Activated CD8-positive, alpha-beta T cell treated with anti-CD3 and anti-CD28 coated beads for 36 hours (primary cell): ENCODE measurements at regions of chr11 and their contacts with region 1.

Region 1: DNA sequence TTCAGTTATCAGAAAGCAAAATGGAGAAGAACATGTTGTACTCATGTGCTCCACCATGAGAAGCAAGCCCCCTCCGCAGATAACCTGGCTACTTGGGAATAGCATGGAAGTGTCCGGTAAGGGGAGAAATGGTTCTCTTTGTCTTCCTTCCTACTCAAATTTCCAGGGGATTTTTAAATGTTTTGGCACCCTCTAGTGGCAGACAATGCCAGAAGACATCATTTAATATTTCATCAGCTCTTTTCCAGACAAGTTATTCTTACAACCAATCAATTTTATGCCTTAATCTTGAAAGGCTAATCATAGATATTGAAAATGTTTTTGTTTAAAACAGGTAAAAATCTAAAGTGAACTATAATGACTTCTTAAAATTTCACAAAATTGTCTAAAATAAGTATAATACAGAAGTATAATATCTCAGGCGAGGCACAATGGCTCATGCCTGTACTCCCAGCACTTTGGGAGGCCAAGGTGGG is 15.7 kb downstream of the CRTAM start:
- DNase-seq: peak; percentile 64
- ATAC-seq: no peak
- H3K4me3 Mint-ChIP-seq: no peak overlapping the region
- H3K27ac Mint-ChIP-seq: no peak overlapping the region
- H3K4me1 Mint-ChIP-seq: peaks cover 66% of the 10 kb centered on the region
- H3K27me3 Mint-ChIP-seq: no peaks in the 10 kb centered on the region
- CTCF ChIP-seq: peak; percentile 95

Region 2: GRCh38 chr11:122556605-122557004 is 297.4 kb before region 1 on chr11:
- CTCF ChIA-PET with region 1: no interaction called
- POLR2A ChIA-PET with region 1: no interaction called
- intact Hi-C with region 1: no loop called
- DNase-seq: peak; percentile 19
- ATAC-seq: peak; percentile 37
- H3K4me3 Mint-ChIP-seq: no peak overlapping the region
- H3K27ac Mint-ChIP-seq: no peak overlapping the region
- H3K4me1 Mint-ChIP-seq: no peaks in the 10 kb centered on the region
- H3K27me3 Mint-ChIP-seq: peaks cover 14% of the 10 kb centered on the region
- CTCF ChIP-seq: no peak

Region 3: DNA sequence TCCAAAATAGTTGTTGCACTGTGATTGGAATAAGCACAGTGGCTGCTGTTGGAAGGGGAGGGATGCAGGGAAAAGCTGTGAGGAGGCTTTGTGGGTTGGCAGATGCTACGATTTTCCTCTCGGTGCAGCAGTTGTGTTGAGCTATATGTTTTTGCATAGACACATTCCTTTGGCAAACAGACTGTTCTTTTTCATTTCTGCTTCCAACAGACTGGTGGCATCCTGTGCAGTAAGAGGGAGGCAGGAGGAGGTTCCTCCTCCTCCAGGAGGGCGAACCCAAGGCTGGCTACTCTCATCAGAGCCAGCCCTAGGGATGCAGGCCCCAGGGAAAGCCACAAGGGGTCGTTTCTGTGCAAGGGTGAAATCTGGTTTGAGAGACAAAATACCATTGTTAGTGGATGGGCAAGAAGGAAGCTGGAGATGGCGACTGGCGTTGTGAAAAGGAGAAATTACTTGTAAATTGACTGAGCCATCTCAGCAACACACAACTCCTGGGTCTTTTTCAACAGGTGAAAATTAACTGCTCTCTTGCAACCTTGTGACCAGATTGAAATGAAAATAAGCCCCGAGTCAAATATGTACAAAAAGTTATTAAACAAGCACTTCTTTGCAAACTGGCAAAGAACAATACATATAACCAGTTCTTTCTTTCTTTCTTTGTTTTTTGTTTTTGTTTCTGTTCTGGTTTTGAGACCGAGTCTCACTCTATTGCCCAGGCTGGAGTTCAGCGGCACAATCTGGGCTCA is 225.0 kb before region 1 on chr11:
- CTCF ChIA-PET with region 1: interaction called, 9 read pairs
- POLR2A ChIA-PET with region 1: no interaction called
- intact Hi-C with region 1: loop called (anchors 5 kb)
- DNase-seq: peak; percentile 83
- ATAC-seq: peak; percentile 96
- H3K4me3 Mint-ChIP-seq: no peak overlapping the region
- H3K27ac Mint-ChIP-seq: no peak overlapping the region
- H3K4me1 Mint-ChIP-seq: peaks cover 14% of the 10 kb centered on the region
- H3K27me3 Mint-ChIP-seq: no peaks in the 10 kb centered on the region
- CTCF ChIP-seq: peak; percentile 86

Region 4: GRCh38 chr11:122749005-122749687 is 104.9 kb before region 1 on chr11:
- CTCF ChIA-PET with region 1: interaction called, 7 read pairs
- POLR2A ChIA-PET with region 1: interaction called, 3 read pairs
- intact Hi-C with region 1: loop called (anchors 5 kb)
- DNase-seq: peak; percentile 83
- ATAC-seq: peak; percentile 73
- H3K4me3 Mint-ChIP-seq: no peak overlapping the region
- H3K27ac Mint-ChIP-seq: no peak overlapping the region
- H3K4me1 Mint-ChIP-seq: peaks cover 30% of the 10 kb centered on the region
- H3K27me3 Mint-ChIP-seq: no peaks in the 10 kb centered on the region
- CTCF ChIP-seq: no peak

Region 5: DNA sequence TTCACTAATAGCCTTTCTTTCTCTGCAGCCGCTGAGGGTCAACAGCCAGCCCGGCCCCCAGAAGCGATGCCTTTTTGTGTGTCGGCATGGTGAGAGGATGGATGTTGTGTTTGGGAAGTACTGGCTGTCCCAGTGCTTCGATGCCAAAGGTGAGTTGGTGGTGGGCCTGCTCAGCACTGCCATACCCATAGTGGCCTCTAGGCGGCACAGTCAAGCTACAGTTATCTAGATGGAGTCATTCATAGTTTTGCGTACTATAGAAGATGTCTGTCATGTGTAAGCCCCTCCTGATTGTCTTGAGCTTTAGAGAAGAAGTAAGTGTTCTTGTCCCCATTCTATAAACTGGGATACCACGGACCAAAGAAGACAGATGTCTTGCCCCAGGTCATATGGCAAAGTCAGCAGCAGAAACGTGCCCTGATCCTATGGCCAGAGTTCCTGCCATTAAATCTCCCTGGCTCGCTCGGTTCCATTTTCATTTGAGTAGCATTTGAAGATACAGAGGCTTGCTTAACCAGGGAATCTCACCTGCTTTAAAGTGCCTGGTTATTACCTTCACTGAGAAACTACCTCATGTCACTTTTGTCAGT is 57.8 kb before region 1 on chr11:
- CTCF ChIA-PET with region 1: interaction called, 352 read pairs
- POLR2A ChIA-PET with region 1: interaction called, 14 read pairs
- intact Hi-C with region 1: loop called (anchors 2 kb)
- DNase-seq: peak; percentile 88
- ATAC-seq: peak; percentile 100
- H3K4me3 Mint-ChIP-seq: no peak overlapping the region
- H3K27ac Mint-ChIP-seq: no peak overlapping the region
- H3K4me1 Mint-ChIP-seq: peaks cover 2% of the 10 kb centered on the region
- H3K27me3 Mint-ChIP-seq: no peaks in the 10 kb centered on the region
- CTCF ChIP-seq: peak; percentile 95

Region 6: GRCh38 chr11:122821169-122821568 is 32.8 kb before region 1 on chr11:
- CTCF ChIA-PET with region 1: interaction called, 108 read pairs
- POLR2A ChIA-PET with region 1: interaction called, 10 read pairs
- intact Hi-C with region 1: no loop called
- DNase-seq: no peak
- ATAC-seq: no peak
- H3K4me3 Mint-ChIP-seq: no peak overlapping the region
- H3K27ac Mint-ChIP-seq: no peak overlapping the region
- H3K4me1 Mint-ChIP-seq: peaks cover 22% of the 10 kb centered on the region
- H3K27me3 Mint-ChIP-seq: no peaks in the 10 kb centered on the region
- CTCF ChIP-seq: no peak

Region 7: GRCh38 chr11:122874991-122875390 is 21.0 kb after region 1 on chr11:
- CTCF ChIA-PET with region 1: interaction called, 10 read pairs
- POLR2A ChIA-PET with region 1: no interaction called
- intact Hi-C with region 1: no loop called
- DNase-seq: no peak
- ATAC-seq: no peak
- H3K4me3 Mint-ChIP-seq: no peak overlapping the region
- H3K27ac Mint-ChIP-seq: no peak overlapping the region
- H3K4me1 Mint-ChIP-seq: peaks cover 14% of the 10 kb centered on the region
- H3K27me3 Mint-ChIP-seq: no peaks in the 10 kb centered on the region
- CTCF ChIP-seq: no peak

Region 8: DNA sequence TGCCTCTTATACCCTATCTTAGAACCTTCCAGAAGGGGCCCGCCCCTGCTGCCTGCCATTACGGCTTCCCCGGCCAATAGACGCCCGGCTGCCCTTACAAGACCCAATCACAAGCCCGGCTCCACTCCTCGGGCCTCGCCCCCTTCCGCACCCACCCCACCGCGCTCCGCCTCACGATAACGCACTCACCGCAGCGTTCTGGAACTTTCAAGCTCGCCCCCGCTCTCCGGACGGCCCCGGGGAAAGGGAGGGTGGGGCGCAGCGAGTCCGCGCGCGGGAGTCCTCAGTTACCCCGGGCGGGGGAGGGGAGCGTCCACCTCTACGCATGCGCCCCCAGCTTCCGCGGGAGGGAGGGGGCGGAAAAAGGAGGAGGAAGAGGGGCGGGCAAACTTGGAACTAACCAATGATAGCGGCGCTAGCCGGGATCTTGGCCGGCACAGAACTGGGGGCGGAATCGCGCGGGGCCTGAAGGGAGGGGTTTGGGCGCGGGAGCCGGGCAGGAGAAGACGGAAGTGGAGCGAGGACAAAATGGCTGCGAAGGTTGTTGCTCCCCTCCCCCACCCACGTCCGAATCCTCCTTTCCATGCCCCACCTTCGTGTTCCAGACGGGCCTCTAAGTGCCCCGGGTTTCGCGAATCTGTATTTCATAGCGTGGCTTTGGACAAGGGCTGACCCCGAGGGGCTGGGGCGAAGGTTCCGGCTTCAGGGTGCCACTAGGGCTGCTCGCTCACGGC is 208.3 kb after region 1 on chr11:
- CTCF ChIA-PET with region 1: interaction called, 4 read pairs
- POLR2A ChIA-PET with region 1: interaction called, 17 read pairs
- intact Hi-C with region 1: no loop called
- DNase-seq: peak; percentile 100
- ATAC-seq: peak; percentile 86
- H3K4me3 Mint-ChIP-seq: peak overlapping the region; percentile 97
- H3K27ac Mint-ChIP-seq: peak overlapping the region; percentile 99
- H3K4me1 Mint-ChIP-seq: peaks cover 32% of the 10 kb centered on the region
- H3K27me3 Mint-ChIP-seq: no peaks in the 10 kb centered on the region
- CTCF ChIP-seq: no peak

Region 9: GRCh38 chr11:123286761-123287160 is 432.8 kb after region 1 on chr11:
- CTCF ChIA-PET with region 1: no interaction called
- POLR2A ChIA-PET with region 1: no interaction called
- intact Hi-C with region 1: no loop called
- DNase-seq: no peak
- ATAC-seq: no peak
- H3K4me3 Mint-ChIP-seq: no peak overlapping the region
- H3K27ac Mint-ChIP-seq: no peak overlapping the region
- H3K4me1 Mint-ChIP-seq: no peaks in the 10 kb centered on the region
- H3K27me3 Mint-ChIP-seq: peaks cover 8% of the 10 kb centered on the region
- CTCF ChIP-seq: no peak